Aorta (tissue), 5 donors: ENCODE measurements at regions of chrX and their contacts with region 1.

Region 1: DNA sequence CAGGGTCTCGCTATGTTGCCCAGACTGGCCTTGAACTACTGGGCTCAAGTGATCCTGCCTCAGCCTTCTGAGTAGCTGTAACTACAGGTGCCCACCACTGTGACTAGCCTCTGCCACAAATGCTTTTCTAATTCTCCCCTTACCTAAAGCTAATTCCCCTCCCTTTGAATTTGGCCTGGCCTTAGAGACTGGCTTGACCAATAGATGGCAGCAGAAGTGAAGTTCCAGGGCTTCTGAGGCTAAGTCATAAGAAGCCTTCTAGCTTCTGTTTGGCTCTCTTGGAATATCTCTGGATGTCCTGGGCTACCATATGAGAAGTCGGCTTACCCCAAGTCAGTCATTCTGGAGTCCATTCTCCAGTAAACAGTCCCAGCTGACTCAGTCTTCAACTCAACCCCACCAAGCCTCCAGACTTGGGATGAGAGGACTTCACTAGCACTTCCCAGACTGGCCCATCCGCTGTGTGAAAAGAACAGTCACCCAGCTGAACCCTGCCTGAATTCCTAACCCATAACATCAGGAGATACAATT is 61.0 kb downstream of the HPRT1 start:
- DNase-seq: no peak
- ATAC-seq: peak; percentile 63
- H3K4me3 ChIP-seq: no peak overlapping the region
- H3K27ac ChIP-seq: no peak overlapping the region
- H3K4me1 ChIP-seq: no peaks in the 10 kb centered on the region
- H3K27me3 ChIP-seq: no peaks in the 10 kb centered on the region

Region 2: DNA sequence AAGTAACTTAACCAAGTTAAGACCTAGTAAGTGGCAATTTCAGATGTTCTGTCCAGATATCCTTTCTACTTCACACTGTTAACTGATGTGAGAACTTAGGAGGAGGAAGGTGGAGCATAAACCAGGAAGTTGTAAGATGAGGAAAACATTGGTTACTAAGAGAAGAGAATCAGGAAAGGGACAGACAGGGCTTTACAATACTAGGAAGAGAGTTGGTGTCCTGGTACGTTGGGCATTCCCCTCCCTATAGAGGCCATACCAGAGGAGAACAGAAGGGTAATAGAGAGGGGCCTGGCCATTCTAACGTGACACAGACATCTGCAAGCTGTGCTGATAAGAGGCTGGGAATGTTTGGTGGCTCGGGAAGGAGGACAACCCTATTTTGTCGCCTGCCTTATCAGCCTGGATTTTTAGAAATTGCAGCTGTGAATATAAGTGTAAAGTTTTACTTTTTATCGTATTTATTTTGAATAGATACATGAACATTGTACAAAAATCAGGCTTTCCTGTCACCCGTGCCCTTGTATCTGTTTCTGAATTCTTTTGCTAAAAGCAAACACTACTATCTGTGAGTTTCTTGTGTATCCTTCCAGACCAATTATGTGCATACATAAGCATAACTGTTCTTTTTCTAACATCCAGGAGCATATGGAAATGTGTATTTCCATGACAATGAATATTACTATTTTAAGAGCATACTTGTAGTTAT is 114.4 kb before region 1 on chrX:
- intact Hi-C with region 1: no loop called
- DNase-seq: no peak
- ATAC-seq: no peak
- H3K4me3 ChIP-seq: no peak overlapping the region
- H3K27ac ChIP-seq: no peak overlapping the region
- H3K4me1 ChIP-seq: no peaks in the 10 kb centered on the region
- H3K27me3 ChIP-seq: no peaks in the 10 kb centered on the region

Region 3: GRCh38 chrX:134443020-134443419 is 77.9 kb before region 1 on chrX:
- intact Hi-C with region 1: no loop called
- DNase-seq: no peak
- ATAC-seq: no peak
- H3K4me3 ChIP-seq: no peak overlapping the region
- H3K27ac ChIP-seq: no peak overlapping the region
- H3K4me1 ChIP-seq: no peaks in the 10 kb centered on the region
- H3K27me3 ChIP-seq: no peaks in the 10 kb centered on the region

Region 4: DNA sequence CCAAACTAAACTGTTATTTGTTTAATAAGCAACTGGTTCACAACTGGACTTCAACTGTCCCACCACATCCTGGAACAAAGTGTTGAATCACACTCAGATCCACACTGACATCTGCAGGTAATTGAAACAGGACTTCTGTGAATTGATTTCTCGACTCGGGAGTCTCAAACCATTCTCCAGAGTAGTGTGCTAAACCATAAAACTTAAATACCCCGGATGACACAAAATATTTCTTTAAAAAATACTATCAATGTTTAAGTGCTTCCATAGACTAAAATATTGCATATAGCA is 232.7 kb after region 1 on chrX:
- intact Hi-C with region 1: loop called in 1 of 2 experiments (anchors 10 kb)
- DNase-seq: no peak
- ATAC-seq: no peak
- H3K4me3 ChIP-seq: no peak overlapping the region
- H3K27ac ChIP-seq: no peak overlapping the region
- H3K4me1 ChIP-seq: no peaks in the 10 kb centered on the region
- H3K27me3 ChIP-seq: no peaks in the 10 kb centered on the region